Activated CD4-positive, alpha-beta memory T cell treated with anti-CD3 and anti-CD28 coated beads for 36 hours (primary cell): ENCODE measurements at regions of chr20 and their contacts with region 1.

Region 1: GRCh38 chr20:35664544-35665221 is at the starts of genes CPNE1 and RBM12:
- DNase-seq: peak; percentile 96
- H3K4me3 Mint-ChIP-seq: peak within 1 kb of the TSS; percentile 91
- H3K27ac Mint-ChIP-seq: peak within 1 kb of the TSS; percentile 98
- H3K4me1 Mint-ChIP-seq: peaks cover 40% of the 10 kb centered on the region
- H3K27me3 Mint-ChIP-seq: no peaks in the 10 kb centered on the region
- total RNA-seq, gene CPNE1: 242 to 253 TPM
- total RNA-seq, gene RBM12: 110 to 114 TPM

Region 2: DNA sequence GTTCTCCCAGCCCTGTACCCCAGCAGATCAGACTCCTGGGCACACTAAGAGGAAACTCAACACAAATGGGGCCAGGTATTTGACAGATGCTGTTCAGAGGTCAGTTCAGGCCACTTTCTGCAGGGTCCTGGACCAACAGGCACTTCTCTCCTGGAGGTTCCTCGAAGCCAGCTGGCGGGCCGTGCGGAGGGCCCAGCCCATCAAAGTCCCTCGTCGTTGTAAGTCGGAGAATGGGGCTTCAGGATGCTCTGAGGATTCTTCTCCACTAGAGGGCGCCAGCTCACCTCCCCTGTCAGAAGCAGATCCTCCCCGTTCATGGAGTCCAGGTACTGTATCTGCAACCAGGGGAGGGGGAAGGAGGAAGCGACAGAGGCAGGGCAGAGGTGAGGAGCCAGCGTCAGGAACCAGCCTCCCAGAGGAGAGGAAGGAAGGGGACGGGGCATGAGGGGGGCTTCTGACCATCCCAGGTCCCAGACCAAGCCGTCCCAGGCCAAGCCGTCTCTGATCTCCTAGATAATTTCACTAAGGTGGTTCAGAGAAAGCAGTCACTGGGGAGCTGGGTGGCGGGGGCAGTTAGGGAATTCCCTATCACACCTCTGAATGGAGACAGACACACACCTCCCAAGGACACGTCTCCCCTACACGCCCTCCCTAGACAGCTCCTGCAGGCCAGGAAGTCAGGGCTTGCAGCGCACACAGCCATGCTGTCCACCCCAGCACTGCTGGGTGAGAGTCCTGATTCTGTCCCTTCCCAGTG is 360.8 kb before region 1 on chr20:
- CTCF ChIA-PET with region 1: no interaction called
- POLR2A ChIA-PET with region 1: interaction called, 3 read pairs
- intact Hi-C with region 1: loop called (anchors 5 kb)
- DNase-seq: peak; percentile 92
- H3K4me3 Mint-ChIP-seq: no peak overlapping the region
- H3K27ac Mint-ChIP-seq: no peak overlapping the region
- H3K4me1 Mint-ChIP-seq: peaks cover 60% of the 10 kb centered on the region
- H3K27me3 Mint-ChIP-seq: no peaks in the 10 kb centered on the region

Region 3: DNA sequence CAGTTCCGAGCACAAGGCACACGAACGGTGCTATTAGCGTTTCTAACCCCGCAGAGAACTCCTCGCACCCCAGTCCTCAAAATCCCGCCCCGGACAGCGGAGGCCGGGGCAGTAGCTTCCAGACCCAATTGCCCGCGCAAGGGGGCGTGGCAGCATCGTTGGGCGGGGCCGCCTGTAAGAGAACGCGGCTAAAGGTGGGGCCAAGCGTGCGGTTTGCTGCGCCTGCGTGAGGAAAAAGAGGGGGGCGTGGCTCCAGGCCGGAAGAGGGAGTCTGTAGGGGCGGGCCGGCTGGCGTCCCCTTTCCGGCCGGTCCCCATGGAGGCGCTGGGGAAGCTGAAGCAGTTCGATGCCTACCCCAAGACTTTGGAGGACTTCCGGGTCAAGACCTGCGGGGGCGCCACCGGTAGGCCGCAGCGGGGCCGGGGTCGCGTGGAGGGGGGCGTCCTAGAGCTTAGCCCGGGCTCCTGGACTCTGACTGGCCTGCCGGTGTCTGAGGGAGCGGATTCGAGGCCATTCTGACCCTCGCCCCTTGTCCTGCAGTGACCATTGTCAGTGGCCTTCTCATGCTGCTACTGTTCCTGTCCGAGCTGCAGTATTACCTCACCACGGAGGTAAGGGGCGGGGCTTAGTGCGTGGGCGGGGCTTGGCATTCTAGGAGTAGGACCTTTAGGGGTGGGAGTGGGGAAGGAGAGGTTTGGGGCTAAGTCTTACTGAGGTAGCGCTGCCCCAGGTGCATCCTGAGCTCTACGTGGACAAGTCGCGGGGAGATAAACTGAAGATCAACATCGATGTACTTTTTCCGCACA is 122.7 kb before region 1 on chr20 and contains the start of gene ERGIC3:
- CTCF ChIA-PET with region 1: no interaction called
- POLR2A ChIA-PET with region 1: no interaction called
- intact Hi-C with region 1: loop called (anchors 5 kb)
- DNase-seq: peak; percentile 99
- H3K4me3 Mint-ChIP-seq: peak within 1 kb of the TSS; percentile 86
- H3K27ac Mint-ChIP-seq: peak within 1 kb of the TSS; percentile 79
- H3K4me1 Mint-ChIP-seq: peaks cover 20% of the 10 kb centered on the region
- H3K27me3 Mint-ChIP-seq: no peaks in the 10 kb centered on the region
- total RNA-seq, gene ERGIC3: 109 to 120 TPM

Region 4: DNA sequence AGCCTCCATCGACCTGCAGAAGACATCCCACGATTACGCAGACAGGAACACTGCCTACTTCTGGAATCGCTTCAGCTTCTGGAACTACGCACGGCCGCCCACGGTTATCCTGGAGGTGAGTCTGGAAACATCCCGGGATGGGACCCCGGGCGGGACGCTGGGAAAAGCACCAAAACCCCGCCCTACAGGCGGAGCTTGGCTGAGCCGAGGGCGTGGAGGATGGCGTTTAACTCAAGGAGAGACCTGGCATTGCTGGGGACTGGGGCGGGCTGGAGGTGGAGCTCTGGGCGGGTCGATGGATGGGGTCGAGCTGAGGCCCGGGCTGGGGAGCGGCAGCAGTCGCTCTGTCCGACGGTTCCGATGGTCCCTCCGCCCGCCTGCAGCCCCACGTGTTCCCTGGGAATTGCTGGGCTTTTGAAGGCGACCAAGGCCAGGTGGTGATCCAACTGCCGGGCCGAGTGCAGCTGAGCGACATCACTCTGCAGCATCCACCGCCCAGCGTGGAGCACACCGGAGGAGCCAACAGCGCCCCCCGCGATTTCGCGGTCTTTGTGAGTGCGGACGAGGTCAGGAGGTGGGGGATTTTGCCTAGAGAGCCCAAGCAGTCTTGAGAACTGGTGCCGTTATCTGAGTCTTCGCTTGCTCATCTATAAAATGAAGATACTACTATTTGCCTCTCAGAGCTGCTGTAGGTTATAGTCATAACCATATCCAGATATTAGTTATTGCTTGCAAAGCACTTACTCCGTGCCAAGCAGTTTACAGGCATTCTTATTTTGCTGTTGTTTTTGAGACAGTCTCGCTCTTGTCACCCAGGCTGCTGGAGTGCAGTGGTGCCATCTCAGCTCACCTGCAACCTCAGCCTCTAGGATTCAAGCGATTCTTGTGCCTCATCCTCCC is 45.2 kb before region 1 on chr20:
- CTCF ChIA-PET with region 1: interaction called, 70 read pairs
- POLR2A ChIA-PET with region 1: interaction called, 93 read pairs
- intact Hi-C with region 1: loop called (anchors 1 kb)
- DNase-seq: peak; percentile 94
- H3K4me3 Mint-ChIP-seq: peak overlapping the region; percentile 83
- H3K27ac Mint-ChIP-seq: peak overlapping the region; percentile 90
- H3K4me1 Mint-ChIP-seq: peaks cover 45% of the 10 kb centered on the region
- H3K27me3 Mint-ChIP-seq: peaks cover 2% of the 10 kb centered on the region

Region 5: GRCh38 chr20:35699127-35699975 is 34.7 kb after region 1 on chr20 and contains the starts of genes NFS1 and ROMO1:
- CTCF ChIA-PET with region 1: interaction called, 5 read pairs
- POLR2A ChIA-PET with region 1: interaction called, 5 read pairs
- intact Hi-C with region 1: loop called (anchors 2 kb)
- DNase-seq: peak; percentile 91
- H3K4me3 Mint-ChIP-seq: peak within 1 kb of the TSS; percentile 88
- H3K27ac Mint-ChIP-seq: peak within 1 kb of the TSS; percentile 91
- H3K4me1 Mint-ChIP-seq: peaks cover 50% of the 10 kb centered on the region
- H3K27me3 Mint-ChIP-seq: no peaks in the 10 kb centered on the region
- total RNA-seq, gene NFS1: 36.9 to 40.8 TPM
- total RNA-seq, gene ROMO1: 141 to 142 TPM

Region 6: GRCh38 chr20:35741892-35742740 is 77.4 kb after region 1 on chr20 and contains the start of gene RBM39:
- CTCF ChIA-PET with region 1: no interaction called
- POLR2A ChIA-PET with region 1: interaction called, 41 read pairs
- intact Hi-C with region 1: loop called (anchors 1 kb)
- DNase-seq: peak; percentile 100
- H3K4me3 Mint-ChIP-seq: peak within 1 kb of the TSS; percentile 96
- H3K27ac Mint-ChIP-seq: peak within 1 kb of the TSS; percentile 98
- H3K4me1 Mint-ChIP-seq: peaks cover 38% of the 10 kb centered on the region
- H3K27me3 Mint-ChIP-seq: peaks cover 2% of the 10 kb centered on the region
- total RNA-seq, gene RBM39: 243 to 259 TPM

Region 7: DNA sequence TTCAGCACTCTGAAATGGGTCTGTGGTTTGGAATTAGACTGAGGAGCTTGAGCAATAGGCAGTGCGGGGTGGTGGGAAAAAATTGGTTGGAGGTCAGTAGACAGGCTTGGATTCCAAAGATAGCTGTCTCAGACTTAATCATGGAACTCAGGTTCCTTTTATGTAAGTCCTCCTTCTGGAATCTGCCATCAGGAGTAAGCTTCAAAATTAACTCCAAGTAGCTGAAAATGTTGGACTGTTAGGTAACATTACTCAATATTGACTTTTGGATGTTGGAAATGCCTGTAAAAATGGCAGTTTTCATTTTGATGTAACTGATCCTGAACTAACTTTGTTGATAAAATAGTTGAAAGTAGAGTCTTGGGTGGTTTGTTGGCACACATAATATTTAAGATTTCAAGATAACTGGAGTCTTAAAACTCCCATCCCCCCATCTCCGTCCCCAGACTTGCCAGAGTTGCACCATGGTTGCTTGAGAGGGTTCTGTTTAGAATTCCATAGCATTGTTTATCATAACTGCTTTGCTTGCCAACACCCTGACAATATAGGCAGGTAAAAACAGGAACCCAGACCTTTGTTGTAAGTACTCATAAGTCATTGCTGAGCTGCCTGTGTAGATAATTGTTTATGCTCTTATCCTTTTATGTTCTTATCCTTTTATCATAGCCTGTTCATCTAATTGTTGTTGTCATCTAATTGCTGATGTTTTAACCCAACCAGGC is 190.2 kb after region 1 on chr20:
- CTCF ChIA-PET with region 1: no interaction called
- POLR2A ChIA-PET with region 1: no interaction called
- intact Hi-C with region 1: no loop called
- DNase-seq: no peak
- H3K4me3 Mint-ChIP-seq: no peak overlapping the region
- H3K27ac Mint-ChIP-seq: no peak overlapping the region
- H3K4me1 Mint-ChIP-seq: peaks cover 16% of the 10 kb centered on the region
- H3K27me3 Mint-ChIP-seq: no peaks in the 10 kb centered on the region

Region 8: GRCh38 chr20:35954200-35954906 is 289.7 kb after region 1 on chr20 and contains the start of gene SCAND1:
- CTCF ChIA-PET with region 1: interaction called, 9 read pairs
- POLR2A ChIA-PET with region 1: interaction called, 12 read pairs
- intact Hi-C with region 1: loop called (anchors 2 kb)
- DNase-seq: peak; percentile 98
- H3K4me3 Mint-ChIP-seq: peak within 1 kb of the TSS; percentile 100
- H3K27ac Mint-ChIP-seq: peak within 1 kb of the TSS; percentile 99
- H3K4me1 Mint-ChIP-seq: peaks cover 14% of the 10 kb centered on the region
- H3K27me3 Mint-ChIP-seq: no peaks in the 10 kb centered on the region
- total RNA-seq, gene SCAND1: 45.4 to 51.3 TPM

Region 9: DNA sequence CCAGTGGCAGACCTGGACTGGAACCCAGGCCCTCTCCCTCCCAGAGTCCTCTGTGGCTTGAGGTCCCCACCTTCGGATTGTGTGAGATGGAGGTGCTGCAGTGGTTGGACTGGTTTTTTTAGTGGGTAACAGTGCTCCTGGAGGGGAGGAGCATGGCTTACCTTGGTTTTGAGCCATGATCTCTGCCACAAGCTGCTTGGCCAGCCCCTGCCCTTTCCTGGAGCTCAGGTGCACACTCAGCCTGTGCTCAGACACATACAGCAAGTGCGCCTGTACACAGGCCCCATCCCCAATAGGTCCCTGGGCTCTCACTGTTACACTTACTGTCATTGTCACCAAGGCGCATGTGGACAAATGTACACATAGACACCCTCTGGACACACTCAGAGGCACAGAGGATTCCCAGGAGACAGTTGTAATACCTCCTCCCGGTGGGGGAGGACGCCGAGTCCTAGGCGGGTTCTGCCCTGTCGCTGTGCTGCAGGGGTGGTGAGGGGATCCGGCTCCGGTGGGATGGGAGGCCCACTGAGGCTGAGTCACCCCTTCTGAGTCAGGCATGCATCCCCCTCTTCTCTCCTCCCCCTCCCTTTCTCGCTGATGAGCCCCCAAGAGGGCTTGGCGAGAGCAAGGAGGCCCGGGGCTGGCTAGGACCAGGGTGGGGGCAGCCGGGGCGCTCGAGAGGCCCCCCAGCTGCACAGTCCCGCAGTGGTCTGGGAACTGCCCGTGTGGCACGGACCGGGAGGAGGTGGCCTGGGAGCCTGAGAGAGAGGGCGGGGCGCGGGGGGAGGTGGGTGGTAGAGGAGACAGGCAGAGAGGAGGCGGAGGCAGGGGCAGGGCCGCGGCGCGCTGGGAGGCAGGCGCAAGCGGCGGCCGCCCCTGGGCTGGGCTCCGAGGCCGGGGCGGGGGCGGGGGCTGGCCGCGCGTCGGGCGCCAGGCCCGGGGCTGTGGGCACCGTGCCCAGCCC is 489.3 kb after region 1 on chr20:
- CTCF ChIA-PET with region 1: no interaction called
- POLR2A ChIA-PET with region 1: no interaction called
- intact Hi-C with region 1: no loop called
- DNase-seq: peak; percentile 46
- H3K4me3 Mint-ChIP-seq: no peak overlapping the region
- H3K27ac Mint-ChIP-seq: no peak overlapping the region
- H3K4me1 Mint-ChIP-seq: no peaks in the 10 kb centered on the region
- H3K27me3 Mint-ChIP-seq: peaks cover 21% of the 10 kb centered on the region